ENCODE measurements at regions of chr2 and their contacts with region 1.

Region 1: GRCh38 chr2:177263451-177264208 is 897 bp downstream of the NFE2L2 start:
- DNase-seq: peak; percentile 97
- ATAC-seq: peak; percentile 50
- H3K4me3 ChIP-seq: peak overlapping the region; percentile 69
- H3K27ac ChIP-seq: peak overlapping the region; percentile 89
- H3K4me1 ChIP-seq: peaks cover 3% of the 10 kb centered on the region
- H3K27me3 ChIP-seq: no peaks in the 10 kb centered on the region
- CTCF ChIP-seq: peak; percentile 90
- POLR2A ChIP-seq: peak; percentile 62
- RAD21 ChIP-seq: peak; percentile 77

Region 2: GRCh38 chr2:177229448-177230242 is 34.0 kb before region 1 on chr2:
- CTCF ChIA-PET with region 1: interaction called, 4 read pairs
- POLR2A ChIA-PET with region 1: no interaction called
- dilution Hi-C with region 1: no loop called
- in situ Hi-C with region 1: no loop called
- intact Hi-C with region 1: loop called (anchors 2 kb)
- DNase-seq: no peak
- ATAC-seq: no peak
- H3K4me3 ChIP-seq: no peak overlapping the region
- H3K27ac ChIP-seq: peak overlapping the region; percentile 14; the same call in 1 of the 2 replicates
- H3K4me1 ChIP-seq: peaks cover 8% of the 10 kb centered on the region; the same call in 1 of the 2 replicates
- H3K27me3 ChIP-seq: no peaks in the 10 kb centered on the region
- CTCF ChIP-seq: no peak
- POLR2A ChIP-seq: no peak; the same call in 1 of the 2 replicates
- RAD21 ChIP-seq: no peak

Region 3: GRCh38 chr2:177397481-177398289 is 134.1 kb after region 1 on chr2:
- CTCF ChIA-PET with region 1: no interaction called
- POLR2A ChIA-PET with region 1: no interaction called
- dilution Hi-C with region 1: no loop called
- in situ Hi-C with region 1: no loop called
- intact Hi-C with region 1: loop called (anchors 5 kb)
- DNase-seq: peak; percentile 89
- ATAC-seq: peak; percentile 38
- H3K4me3 ChIP-seq: no peak overlapping the region
- H3K27ac ChIP-seq: peak overlapping the region; percentile 34
- H3K4me1 ChIP-seq: peaks cover 6% of the 10 kb centered on the region
- H3K27me3 ChIP-seq: no peaks in the 10 kb centered on the region
- CTCF ChIP-seq: no peak
- POLR2A ChIP-seq: no peak
- RAD21 ChIP-seq: no peak

Region 4: GRCh38 chr2:177604271-177605065 is 340.8 kb after region 1 on chr2:
- CTCF ChIA-PET with region 1: no interaction called
- POLR2A ChIA-PET with region 1: no interaction called
- dilution Hi-C with region 1: no loop called
- in situ Hi-C with region 1: no loop called
- intact Hi-C with region 1: loop called (anchors 10 kb)
- DNase-seq: peak; percentile 71
- ATAC-seq: peak; percentile 91
- H3K4me3 ChIP-seq: no peak overlapping the region
- H3K27ac ChIP-seq: no peak overlapping the region; the same call in 1 of the 2 replicates
- H3K4me1 ChIP-seq: peaks cover 2% of the 10 kb centered on the region
- H3K27me3 ChIP-seq: peaks cover 4% of the 10 kb centered on the region; the same call in 1 of the 2 replicates
- CTCF ChIP-seq: peak; percentile 72
- POLR2A ChIP-seq: no peak
- RAD21 ChIP-seq: peak; percentile 63

Region 5: DNA sequence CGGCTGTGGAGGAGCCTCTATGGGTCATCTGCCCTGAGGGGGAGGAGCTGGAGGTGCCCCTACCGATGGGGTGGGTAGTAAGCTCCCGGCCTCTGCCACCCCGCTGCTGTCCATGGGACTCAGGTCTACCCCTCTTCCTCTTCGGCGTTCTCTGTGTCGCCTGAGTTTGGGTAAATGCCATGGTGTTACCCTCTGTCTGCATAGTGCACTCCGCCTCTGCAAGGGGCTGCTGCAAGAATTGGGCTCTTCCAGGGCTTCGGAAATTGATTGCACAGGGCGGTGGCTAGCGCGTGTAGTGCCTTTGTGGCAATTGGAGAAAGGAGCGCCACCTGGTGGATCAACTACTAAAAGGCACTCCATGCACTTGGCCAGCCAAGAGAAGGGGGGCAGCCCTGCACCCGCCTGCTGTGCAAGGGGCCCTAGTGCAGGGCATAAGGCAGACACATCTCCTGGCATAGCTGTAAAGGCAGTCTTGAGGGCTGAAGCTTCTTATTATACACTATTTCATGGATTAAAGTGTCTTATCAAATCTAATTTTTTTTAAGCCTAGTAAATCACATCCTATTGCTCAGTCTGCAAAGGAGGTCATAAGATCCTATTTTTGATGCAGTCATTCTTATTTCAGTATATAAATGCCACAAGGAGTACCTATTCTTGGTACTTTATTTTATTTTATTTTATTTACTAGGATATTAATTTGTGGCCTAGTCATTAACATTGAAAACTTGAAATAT is 500.1 kb after region 1 on chr2:
- CTCF ChIA-PET with region 1: no interaction called
- POLR2A ChIA-PET with region 1: no interaction called
- dilution Hi-C with region 1: no loop called
- in situ Hi-C with region 1: no loop called
- intact Hi-C with region 1: loop called (anchors 2 kb)
- DNase-seq: peak; percentile 58
- ATAC-seq: peak; percentile 98
- H3K4me3 ChIP-seq: no peak overlapping the region
- H3K27ac ChIP-seq: no peak overlapping the region
- H3K4me1 ChIP-seq: no peaks in the 10 kb centered on the region
- H3K27me3 ChIP-seq: peaks cover 4% of the 10 kb centered on the region; the same call in 1 of the 2 replicates
- CTCF ChIP-seq: peak; percentile 71
- POLR2A ChIP-seq: no peak
- RAD21 ChIP-seq: peak; percentile 55

Measured in IMR-90 (cell line).